Breast epithelium (tissue), 4 donors: ENCODE measurements at regions of chr3 and their contacts with region 1.

Region 1: GRCh38 chr3:86993711-86994110 is 2.8 kb upstream of the VGLL3 start:
- DNase-seq: no peak
- H3K4me3 ChIP-seq: no peak overlapping the region
- H3K27ac ChIP-seq: no peak overlapping the region
- H3K4me1 ChIP-seq: no peaks in the 10 kb centered on the region
- H3K27me3 ChIP-seq: peaks cover 0 to 6% of the 10 kb centered on the region in 2 donors
- CTCF ChIP-seq: no peak
- POLR2A ChIP-seq: no peak

Region 2: GRCh38 chr3:86547697-86548096 is 446.0 kb before region 1 on chr3:
- intact Hi-C with region 1: no loop called
- DNase-seq: no peak
- H3K4me3 ChIP-seq: no peak overlapping the region
- H3K27ac ChIP-seq: no peak overlapping the region
- H3K4me1 ChIP-seq: no peaks in the 10 kb centered on the region
- H3K27me3 ChIP-seq: no peaks in the 10 kb centered on the region
- CTCF ChIP-seq: no peak
- POLR2A ChIP-seq: no peak

Region 3: DNA sequence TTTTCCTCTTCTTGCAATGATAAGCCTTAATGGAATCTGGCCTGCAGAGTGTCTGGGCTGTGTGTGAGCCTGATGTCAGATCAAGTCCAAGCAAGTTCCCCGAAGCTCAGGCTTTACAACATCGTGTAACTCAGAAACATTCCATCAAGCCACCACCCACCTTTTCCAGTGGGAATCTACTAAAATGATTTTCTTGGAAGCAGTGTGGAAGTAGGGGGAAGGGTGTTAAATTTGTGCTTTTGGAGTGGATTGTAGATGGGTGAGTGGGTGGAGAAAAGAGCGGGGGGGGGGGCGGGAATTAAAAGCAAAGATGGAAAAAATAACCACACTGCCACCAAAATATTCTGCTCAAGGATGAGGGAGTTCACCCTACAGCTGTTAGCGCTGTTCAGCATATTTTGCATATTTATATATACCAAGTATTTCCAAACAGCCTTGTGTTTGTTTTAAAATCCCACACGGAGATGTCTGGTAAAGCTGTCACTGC is 56.4 kb before region 1 on chr3:
- intact Hi-C with region 1: loop called (anchors 2 kb)
- DNase-seq: peak in 1 of 2 donors; percentile 27
- H3K4me3 ChIP-seq: no peak overlapping the region
- H3K27ac ChIP-seq: peak overlapping the region; percentile 31 to 68
- H3K4me1 ChIP-seq: no peaks in the 10 kb centered on the region
- H3K27me3 ChIP-seq: no peaks in the 10 kb centered on the region
- CTCF ChIP-seq: no peak
- POLR2A ChIP-seq: no peak